Panc1 (cell line): ENCODE measurements at regions of chr18 and their contacts with region 1.

Region 1: GRCh38 chr18:62522504-62523254 is at the start of gene ZCCHC2:
- DNase-seq: peak; percentile 85
- ATAC-seq: peak; percentile 86
- H3K4me3 ChIP-seq: peak within 1 kb of the TSS; percentile 68 to 71
- H3K27ac ChIP-seq: peak within 1 kb of the TSS; percentile 89
- H3K4me1 ChIP-seq: peaks cover 10% of the 10 kb centered on the region
- H3K27me3 ChIP-seq: no peaks in the 10 kb centered on the region
- CTCF ChIP-seq: no peak
- total RNA-seq, gene ZCCHC2: 18.2 TPM

Region 2: GRCh38 chr18:62324917-62325805 is 197.5 kb before region 1 on chr18 and contains the start of gene TNFRSF11A:
- CTCF ChIA-PET with region 1: no interaction called
- POLR2A ChIA-PET with region 1: no interaction called
- in situ Hi-C with region 1: no loop called
- intact Hi-C with region 1: loop called (anchors 10 kb)
- DNase-seq: no peak
- ATAC-seq: peak; percentile 88
- H3K4me3 ChIP-seq: peak within 1 kb of the TSS; percentile 66 to 76
- H3K27ac ChIP-seq: peak within 1 kb of the TSS; percentile 65
- H3K4me1 ChIP-seq: peaks cover 32% of the 10 kb centered on the region
- H3K27me3 ChIP-seq: no peaks in the 10 kb centered on the region
- CTCF ChIP-seq: peak; percentile 83
- total RNA-seq, gene TNFRSF11A: 14.1 TPM

Region 3: DNA sequence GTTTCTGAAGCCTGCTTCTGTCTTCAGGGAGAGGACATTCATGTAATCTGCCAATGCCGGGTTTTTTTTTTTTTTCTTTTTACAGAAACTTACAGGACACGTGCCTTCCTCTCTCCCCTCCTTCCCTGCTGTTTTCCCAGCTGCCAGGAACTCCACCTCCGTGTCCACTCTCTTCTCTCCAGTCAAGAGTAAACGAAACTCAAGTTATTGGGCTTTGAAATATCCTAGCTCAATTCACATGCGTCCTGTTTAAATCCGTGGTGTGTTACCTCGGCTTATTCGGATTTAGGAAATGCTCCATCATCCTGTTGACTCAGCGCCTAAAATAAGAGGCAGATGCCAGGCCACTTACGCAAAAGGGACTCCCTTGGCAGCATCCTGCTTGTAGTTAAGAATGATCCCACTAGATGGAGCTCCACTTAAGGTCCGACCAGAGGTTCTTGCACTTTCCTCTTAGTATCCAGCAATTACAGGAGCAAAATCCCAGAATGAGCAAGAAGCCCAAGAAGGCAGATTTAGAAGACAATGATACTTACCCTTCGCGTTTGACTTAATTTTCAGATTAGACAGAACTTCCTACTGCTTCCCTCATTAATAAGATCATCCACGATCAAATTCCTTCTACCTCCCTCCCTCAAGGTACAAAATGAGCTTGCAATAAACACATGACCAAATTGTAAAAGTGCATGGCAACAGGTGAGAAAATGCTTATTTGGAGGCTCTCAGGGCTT is 97.0 kb before region 1 on chr18:
- CTCF ChIA-PET with region 1: no interaction called
- POLR2A ChIA-PET with region 1: no interaction called
- in situ Hi-C with region 1: no loop called
- intact Hi-C with region 1: loop called (anchors 5 kb)
- DNase-seq: peak; percentile 94
- ATAC-seq: peak; percentile 92
- H3K4me3 ChIP-seq: peak overlapping the region; percentile 24 to 60
- H3K27ac ChIP-seq: peak overlapping the region; percentile 70
- H3K4me1 ChIP-seq: peaks cover 12% of the 10 kb centered on the region
- H3K27me3 ChIP-seq: no peaks in the 10 kb centered on the region
- CTCF ChIP-seq: peak; percentile 75

Region 4: DNA sequence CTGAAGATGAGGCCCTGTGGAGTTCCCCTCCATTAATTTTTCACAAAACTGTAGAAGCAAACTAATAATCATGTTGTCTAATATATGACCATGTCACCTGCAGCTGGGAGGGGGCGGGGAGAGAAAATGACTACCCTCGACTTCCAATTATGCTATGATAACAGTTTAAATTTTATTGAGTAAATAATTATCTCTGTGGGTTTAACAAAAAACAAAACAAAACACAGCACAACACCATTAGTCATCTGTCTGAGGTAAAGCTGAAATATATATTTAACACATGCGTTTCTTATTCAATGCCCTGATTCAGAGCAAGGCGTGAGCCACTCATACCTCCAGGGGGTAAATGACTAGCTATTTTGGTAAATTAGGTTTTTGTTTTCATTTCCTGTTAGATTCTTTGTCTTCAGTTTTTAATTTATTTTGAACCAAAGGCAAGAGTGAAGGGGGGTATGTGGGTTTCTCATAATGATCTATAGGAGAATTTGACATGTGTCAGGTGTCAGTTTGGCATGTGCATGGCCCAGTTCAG is 77.2 kb before region 1 on chr18:
- CTCF ChIA-PET with region 1: no interaction called
- POLR2A ChIA-PET with region 1: interaction called, 11 read pairs
- in situ Hi-C with region 1: no loop called
- intact Hi-C with region 1: no loop called
- DNase-seq: no peak
- ATAC-seq: no peak
- H3K4me3 ChIP-seq: no peak overlapping the region
- H3K27ac ChIP-seq: no peak overlapping the region
- H3K4me1 ChIP-seq: no peaks in the 10 kb centered on the region
- H3K27me3 ChIP-seq: no peaks in the 10 kb centered on the region
- CTCF ChIP-seq: no peak

Region 5: DNA sequence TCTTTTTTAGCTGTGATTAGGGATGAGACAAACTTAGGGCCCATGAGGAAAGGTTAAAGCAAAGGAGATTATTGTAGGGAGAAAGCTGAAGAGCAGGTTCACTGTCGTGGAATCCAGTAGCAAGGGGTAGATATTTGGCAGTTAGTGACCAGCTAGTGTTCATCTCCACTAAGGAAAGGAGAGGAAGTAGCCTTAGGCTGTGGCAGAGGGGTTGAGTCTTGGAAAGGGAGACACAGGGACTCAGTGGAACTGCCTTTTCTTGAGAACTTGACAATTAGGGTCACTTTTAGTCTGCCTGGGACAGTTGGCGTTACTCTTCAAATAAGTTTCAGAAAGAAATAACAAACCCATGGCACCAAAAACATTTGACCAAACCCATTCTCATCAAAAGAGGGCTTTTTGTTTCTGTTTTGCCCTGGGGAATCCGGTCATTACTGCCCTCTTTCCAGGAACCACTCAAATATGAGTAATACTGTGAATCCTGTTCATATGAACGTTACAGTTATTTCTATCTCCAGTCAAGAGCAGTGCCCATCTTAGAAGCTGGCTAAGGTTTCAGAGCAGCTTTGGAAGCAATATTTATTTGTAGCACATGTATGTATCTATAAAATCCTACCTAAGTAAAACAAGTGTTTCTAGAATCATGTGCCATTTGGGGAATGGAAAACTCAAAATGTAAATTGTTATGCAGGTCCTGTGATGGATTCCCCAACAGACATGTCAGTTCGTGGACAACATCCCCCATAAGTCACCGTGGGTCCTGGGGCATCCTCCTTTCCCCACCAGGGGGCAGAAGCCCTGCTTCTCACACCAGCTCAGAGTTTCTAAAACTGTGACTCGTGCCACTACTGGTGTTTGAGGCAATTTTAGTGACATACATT is 115.4 kb after region 1 on chr18:
- CTCF ChIA-PET with region 1: no interaction called
- POLR2A ChIA-PET with region 1: no interaction called
- in situ Hi-C with region 1: no loop called
- intact Hi-C with region 1: no loop called
- DNase-seq: peak; percentile 15
- ATAC-seq: no peak
- H3K4me3 ChIP-seq: no peak overlapping the region
- H3K27ac ChIP-seq: no peak overlapping the region
- H3K4me1 ChIP-seq: no peaks in the 10 kb centered on the region
- H3K27me3 ChIP-seq: no peaks in the 10 kb centered on the region
- CTCF ChIP-seq: peak; percentile 59